GM12878 (cell line): ENCODE measurements at regions of chr12 and their contacts with region 1.

Region 1: GRCh38 chr12:113174461-113175384 is 10.6 kb downstream of the DDX54 start:
- DNase-seq: no peak
- ATAC-seq: peak; percentile 91
- H3K4me3 ChIP-seq: no peak overlapping the region
- H3K27ac ChIP-seq: no peak overlapping the region
- H3K4me1 ChIP-seq: peaks cover 19% of the 10 kb centered on the region
- H3K27me3 ChIP-seq: no peaks in the 10 kb centered on the region
- CTCF ChIP-seq: peak; percentile 87 to 99 (median 98)
- EP300 ChIP-seq: no peak
- POLR2A ChIP-seq: peak; percentile 50
- RAD21 ChIP-seq: peak; percentile 90

Region 2: GRCh38 chr12:112900299-112901145 is 274.2 kb before region 1 on chr12:
- CTCF ChIA-PET with region 1: interaction called, 17 read pairs
- POLR2A ChIA-PET with region 1: no interaction called
- RAD21 ChIA-PET with region 1: interaction called, 5 read pairs
- SMC1A ChIA-PET with region 1: interaction called, 7 read pairs
- in situ Hi-C with region 1: no loop called
- intact Hi-C with region 1: loop called (anchors 5 kb)
- DNase-seq: no peak
- ATAC-seq: peak; percentile 75
- H3K4me3 ChIP-seq: no peak overlapping the region
- H3K27ac ChIP-seq: no peak overlapping the region
- H3K4me1 ChIP-seq: peaks cover 6% of the 10 kb centered on the region
- H3K27me3 ChIP-seq: no peaks in the 10 kb centered on the region
- CTCF ChIP-seq: peak; percentile 68 to 84 (median 73)
- EP300 ChIP-seq: no peak
- POLR2A ChIP-seq: no peak
- RAD21 ChIP-seq: peak; percentile 82

Region 3: GRCh38 chr12:113048716-113049127 is 126.0 kb before region 1 on chr12:
- CTCF ChIA-PET with region 1: interaction called, 102 read pairs
- POLR2A ChIA-PET with region 1: interaction called, 3 read pairs
- RAD21 ChIA-PET with region 1: interaction called, 26 read pairs
- SMC1A ChIA-PET with region 1: interaction called, 66 read pairs
- in situ Hi-C with region 1: loop called (anchors 5 kb)
- intact Hi-C with region 1: loop called (anchors 1 kb)
- DNase-seq: no peak
- ATAC-seq: peak; percentile 87
- H3K4me3 ChIP-seq: no peak overlapping the region
- H3K27ac ChIP-seq: no peak overlapping the region
- H3K4me1 ChIP-seq: peaks cover 35% of the 10 kb centered on the region
- H3K27me3 ChIP-seq: no peaks in the 10 kb centered on the region
- CTCF ChIP-seq: peak; percentile 61 to 88 (median 75)
- EP300 ChIP-seq: no peak
- POLR2A ChIP-seq: no peak
- RAD21 ChIP-seq: peak; percentile 98

Region 4: GRCh38 chr12:113098446-113098896 is 76.3 kb before region 1 on chr12:
- CTCF ChIA-PET with region 1: interaction called, 92 read pairs
- POLR2A ChIA-PET with region 1: interaction called, 3 read pairs
- RAD21 ChIA-PET with region 1: interaction called, 16 read pairs
- SMC1A ChIA-PET with region 1: interaction called, 20 read pairs
- in situ Hi-C with region 1: no loop called
- intact Hi-C with region 1: loop called (anchors 2 kb)
- DNase-seq: no peak
- ATAC-seq: peak; percentile 91
- H3K4me3 ChIP-seq: no peak overlapping the region
- H3K27ac ChIP-seq: no peak overlapping the region
- H3K4me1 ChIP-seq: peaks cover 10% of the 10 kb centered on the region; the same call in 1 of the 2 replicates
- H3K27me3 ChIP-seq: no peaks in the 10 kb centered on the region
- CTCF ChIP-seq: peak; percentile 95 to 98 (median 97); a peak in 5 of 6 replicates
- EP300 ChIP-seq: no peak
- POLR2A ChIP-seq: no peak
- RAD21 ChIP-seq: peak; percentile 93

Region 5: GRCh38 chr12:113135178-113136127 is 39.3 kb before region 1 on chr12 and contains the start of gene RASAL1:
- CTCF ChIA-PET with region 1: interaction called, 14 read pairs
- POLR2A ChIA-PET with region 1: no interaction called
- RAD21 ChIA-PET with region 1: interaction called, 10 read pairs
- SMC1A ChIA-PET with region 1: interaction called, 5 read pairs
- in situ Hi-C with region 1: no loop called
- intact Hi-C with region 1: no loop called
- DNase-seq: no peak
- ATAC-seq: peak; percentile 91
- H3K4me3 ChIP-seq: no peak within 1 kb of the TSS
- H3K27ac ChIP-seq: no peak within 1 kb of the TSS
- H3K4me1 ChIP-seq: peaks cover under 1% of the 10 kb centered on the region; the same call in 1 of the 2 replicates
- H3K27me3 ChIP-seq: no peaks in the 10 kb centered on the region; a peak in 2 of 4 replicates
- CTCF ChIP-seq: peak; percentile 41 to 69 (median 53)
- EP300 ChIP-seq: no peak
- POLR2A ChIP-seq: no peak
- RAD21 ChIP-seq: no peak
- polyA plus RNA-seq, gene RASAL1: not detected

Region 6: DNA sequence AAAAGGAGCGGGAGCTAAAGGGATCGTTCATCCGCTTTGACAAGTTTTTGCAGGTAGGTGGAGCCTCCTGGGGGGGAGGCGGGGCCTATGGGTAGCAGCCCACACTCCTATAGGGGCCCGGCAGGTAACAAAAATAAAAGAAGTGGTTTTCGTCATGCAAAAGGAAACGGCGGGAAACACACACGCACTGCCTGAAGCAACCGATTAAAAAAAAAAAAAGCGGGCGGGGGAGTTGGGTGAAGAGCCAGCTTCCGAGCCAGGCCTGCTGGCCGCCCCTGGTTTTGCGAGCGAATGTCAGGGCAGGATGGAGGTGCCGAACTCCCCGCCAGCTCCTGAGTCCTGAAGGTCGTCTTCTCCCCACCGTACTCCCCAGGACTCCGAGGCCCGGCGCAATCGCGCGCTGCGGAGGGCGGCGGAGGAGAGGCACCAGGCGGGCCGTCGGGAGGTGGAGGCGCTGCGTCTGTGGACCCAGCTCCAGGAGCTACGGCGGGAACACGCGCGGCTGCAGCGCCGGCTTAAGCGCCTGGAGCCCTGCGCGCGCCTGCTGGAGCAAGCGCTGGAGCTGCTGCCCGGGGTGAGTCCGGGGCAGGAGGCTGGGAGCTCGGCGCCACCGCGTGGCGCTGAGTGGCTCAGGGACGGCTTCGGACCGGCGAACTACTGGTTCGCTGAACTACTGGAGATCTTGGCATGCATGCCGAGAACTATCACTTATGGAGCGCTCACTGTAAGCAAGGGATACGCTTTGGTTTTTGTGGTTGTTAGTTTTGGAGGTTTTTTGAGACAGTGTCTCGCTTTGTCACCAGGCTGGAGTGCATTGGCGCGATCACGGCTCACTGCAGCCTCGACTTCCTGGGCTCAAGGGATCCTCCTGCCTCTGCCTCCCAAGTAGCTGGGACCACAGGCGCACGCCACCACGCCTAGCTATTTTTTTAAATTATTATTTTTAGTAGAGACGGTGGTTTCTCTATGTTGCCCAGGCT is 21.6 kb before region 1 on chr12:
- CTCF ChIA-PET with region 1: interaction called, 31 read pairs
- POLR2A ChIA-PET with region 1: interaction called, 3 read pairs
- RAD21 ChIA-PET with region 1: interaction called, 29 read pairs
- SMC1A ChIA-PET with region 1: interaction called, 37 read pairs
- in situ Hi-C with region 1: no loop called
- intact Hi-C with region 1: no loop called
- DNase-seq: no peak
- ATAC-seq: peak; percentile 89
- H3K4me3 ChIP-seq: peak overlapping the region; percentile 59; the same call in 1 of the 2 replicates
- H3K27ac ChIP-seq: no peak overlapping the region
- H3K4me1 ChIP-seq: peaks cover 15% of the 10 kb centered on the region
- H3K27me3 ChIP-seq: peaks cover 7 to 8% of the 10 kb centered on the region in 2 experiments; a peak in 2 of 4 replicates
- CTCF ChIP-seq: peak; percentile 45 to 77 (median 53); a peak in 5 of 6 replicates
- EP300 ChIP-seq: no peak
- POLR2A ChIP-seq: no peak
- RAD21 ChIP-seq: peak; percentile 59

Region 7: DNA sequence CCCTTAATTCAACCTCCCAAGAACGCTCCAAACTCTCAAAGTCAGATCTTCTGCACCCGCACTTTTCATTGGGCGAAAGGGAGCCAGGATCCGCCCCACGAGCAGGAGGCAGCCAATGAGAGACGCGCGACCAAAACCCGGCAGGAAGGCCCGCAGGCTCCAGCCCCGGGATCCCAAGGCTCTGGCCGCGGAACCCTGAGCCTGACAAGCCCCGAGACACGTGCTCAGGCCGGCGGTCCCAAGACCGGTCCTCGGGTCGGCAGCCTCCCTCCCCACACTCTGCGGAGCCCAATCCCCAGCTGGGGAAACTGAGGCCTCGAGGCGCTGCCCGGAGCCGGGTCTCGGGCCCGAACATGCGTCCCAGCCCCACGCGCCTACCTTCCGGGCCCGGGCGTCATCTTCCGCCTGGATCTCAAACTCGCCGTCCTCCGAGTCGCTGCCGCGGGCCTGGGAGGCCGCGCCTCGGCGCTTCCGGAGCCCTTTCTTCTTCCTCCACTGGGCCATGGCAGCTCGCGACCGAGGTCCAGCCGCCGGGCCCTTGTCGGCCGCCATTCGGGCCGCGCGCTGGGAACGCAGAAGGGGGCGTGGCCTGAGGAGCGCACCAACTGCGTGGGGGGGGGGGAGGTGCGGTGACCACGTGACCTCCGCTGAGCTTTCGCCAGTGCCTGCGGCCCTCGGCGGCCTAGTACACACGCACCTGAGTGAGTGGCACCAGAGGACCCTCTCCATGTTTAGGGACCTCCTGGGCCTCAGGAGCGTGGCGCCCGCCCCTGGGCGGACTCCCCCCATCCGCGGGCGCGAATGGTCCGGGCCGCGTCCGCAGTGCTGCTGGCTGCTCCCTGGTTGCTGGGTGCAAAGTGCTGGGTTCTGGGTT is 10.4 kb after region 1 on chr12 and contains the starts of genes DDX54 and RITA1:
- CTCF ChIA-PET with region 1: interaction called, 29 read pairs
- POLR2A ChIA-PET with region 1: interaction called, 3 read pairs
- RAD21 ChIA-PET with region 1: interaction called, 10 read pairs
- SMC1A ChIA-PET with region 1: interaction called, 9 read pairs
- in situ Hi-C with region 1: no loop called
- intact Hi-C with region 1: no loop called
- DNase-seq: peak; percentile 81
- ATAC-seq: peak; percentile 87
- H3K4me3 ChIP-seq: peak within 1 kb of the TSS; percentile 86
- H3K27ac ChIP-seq: peak within 1 kb of the TSS; percentile 94
- H3K4me1 ChIP-seq: peaks cover 9% of the 10 kb centered on the region
- H3K27me3 ChIP-seq: no peaks in the 10 kb centered on the region
- CTCF ChIP-seq: no peak
- EP300 ChIP-seq: no peak
- POLR2A ChIP-seq: peak; percentile 98
- RAD21 ChIP-seq: no peak
- polyA plus RNA-seq, gene DDX54: 1.9 to 8.6 TPM
- polyA plus RNA-seq, gene RITA1: 2.3 to 6.4 TPM